Esophagus muscularis mucosa (tissue), 4 donors: ENCODE measurements at regions of chr3 and their contacts with region 1.

Region 1: DNA sequence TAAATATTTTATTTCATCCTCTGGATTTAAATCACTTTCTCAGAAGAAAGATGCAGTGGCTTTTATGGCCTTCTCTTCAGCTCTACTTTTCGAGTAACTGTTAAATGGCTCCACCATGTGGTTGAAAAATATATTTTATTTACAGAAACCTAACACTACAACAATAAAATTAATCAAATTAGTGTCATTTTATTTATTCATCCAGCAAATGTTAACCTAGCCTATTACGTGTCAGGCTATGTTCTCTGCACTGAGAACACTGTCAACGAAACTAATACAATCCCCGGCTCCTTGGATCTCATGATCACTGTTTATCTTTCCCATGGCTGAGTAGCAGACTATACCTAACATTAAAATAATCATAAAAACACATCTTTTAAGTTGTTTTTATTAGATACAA is 148.0 kb upstream of the OSTN start:
- DNase-seq: no peak
- H3K4me3 ChIP-seq: no peak overlapping the region
- H3K27ac ChIP-seq: no peak overlapping the region
- H3K4me1 ChIP-seq: no peaks in the 10 kb centered on the region
- H3K27me3 ChIP-seq: no peaks in the 10 kb centered on the region
- CTCF ChIP-seq: peak; percentile 22 to 50 (median 49)
- EP300 ChIP-seq: no peak
- POLR2A ChIP-seq: no peak

Region 2: GRCh38 chr3:190811775-190812480 is 239.1 kb before region 1 on chr3:
- intact Hi-C with region 1: loop called (anchors 5 kb)
- DNase-seq: no peak
- H3K4me3 ChIP-seq: peak overlapping the region in 1 of 4 donors; percentile 26
- H3K27ac ChIP-seq: no peak overlapping the region
- H3K4me1 ChIP-seq: peaks cover 0 to 4% (median 0%) of the 10 kb centered on the region in 4 donors
- H3K27me3 ChIP-seq: no peaks in the 10 kb centered on the region
- CTCF ChIP-seq: peak in 2 of 3 experiments; percentile 50 to 51
- EP300 ChIP-seq: no peak
- POLR2A ChIP-seq: no peak

Region 3: DNA sequence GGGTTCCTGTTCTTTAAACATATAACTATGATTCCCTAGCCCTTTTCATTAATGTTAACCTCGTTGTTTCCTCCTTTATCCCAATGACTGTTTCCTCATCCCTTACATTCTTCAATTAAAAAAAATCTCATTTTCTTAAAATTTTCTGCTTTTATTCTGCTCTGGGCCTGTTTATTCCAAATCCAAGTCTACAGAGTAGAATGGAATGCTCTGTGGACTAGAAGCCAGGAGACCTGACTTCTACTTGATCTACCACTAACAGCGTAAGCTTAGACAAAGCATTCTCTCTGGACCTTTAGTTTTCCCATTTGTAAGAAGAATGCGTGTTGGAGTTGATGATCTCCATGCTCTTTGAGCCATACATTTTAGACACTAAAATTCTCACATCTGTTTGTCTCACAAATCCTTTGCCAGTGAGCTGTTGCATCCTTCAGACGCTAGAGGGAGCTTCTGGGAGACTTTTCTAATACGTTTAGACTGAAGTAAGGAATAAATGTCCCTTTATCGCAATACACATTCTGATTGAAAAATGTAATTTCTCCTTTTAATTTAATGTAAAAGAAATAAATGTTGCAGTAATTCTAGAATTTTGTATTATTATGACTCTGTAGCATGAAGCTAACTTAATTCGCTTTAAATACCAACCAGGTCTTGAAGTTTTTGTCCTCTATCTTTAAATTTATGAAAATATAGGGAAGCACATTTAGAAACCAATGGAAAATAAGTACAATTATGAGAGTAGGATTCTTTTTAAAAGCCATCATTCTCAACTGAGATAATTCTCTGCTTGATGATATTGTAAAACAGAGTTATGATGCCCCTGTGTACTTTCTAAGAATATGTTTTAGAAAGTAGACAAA is 166.8 kb before region 1 on chr3:
- intact Hi-C with region 1: loop called (anchors 2 kb)
- DNase-seq: no peak
- H3K4me3 ChIP-seq: no peak overlapping the region
- H3K27ac ChIP-seq: no peak overlapping the region
- H3K4me1 ChIP-seq: no peaks in the 10 kb centered on the region
- H3K27me3 ChIP-seq: no peaks in the 10 kb centered on the region
- CTCF ChIP-seq: peak; percentile 66 to 92 (median 83)
- EP300 ChIP-seq: no peak
- POLR2A ChIP-seq: no peak